ENCODE measurements at regions of chr10 and their contacts with region 1.

Region 1: DNA sequence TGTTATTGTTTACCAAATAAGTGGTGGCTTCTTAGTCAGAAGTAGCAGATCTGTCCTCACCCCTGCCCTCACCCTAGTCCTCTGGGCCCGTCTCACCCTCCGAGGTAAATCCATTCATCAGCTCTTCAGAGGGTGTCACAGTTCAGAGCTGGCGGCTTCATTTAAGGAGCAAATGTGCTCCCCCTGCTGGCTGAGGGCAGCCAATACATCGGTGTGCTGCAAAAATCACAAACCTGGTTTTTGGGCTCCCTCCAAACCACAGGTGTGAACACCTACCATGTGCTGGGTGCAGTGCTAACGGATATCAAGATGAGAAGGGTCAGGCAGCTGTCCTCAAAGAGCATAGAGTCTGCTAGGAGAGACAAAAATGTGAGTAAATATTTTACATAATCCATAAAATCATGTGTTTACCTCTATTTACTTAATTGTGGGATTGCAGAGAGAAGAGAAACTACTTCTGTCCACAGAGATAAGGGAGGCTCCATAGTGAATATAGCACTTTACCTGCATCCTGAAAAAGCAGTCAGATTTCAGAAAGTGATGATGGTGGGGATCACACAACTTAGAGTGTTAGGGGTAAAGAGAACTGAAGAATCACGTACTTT is 15.5 kb upstream of the CRTAC1 start:
- DNase-seq: no peak
- H3K4me3 ChIP-seq: no peak overlapping the region
- CTCF ChIP-seq: peak; percentile 75

Region 2: DNA sequence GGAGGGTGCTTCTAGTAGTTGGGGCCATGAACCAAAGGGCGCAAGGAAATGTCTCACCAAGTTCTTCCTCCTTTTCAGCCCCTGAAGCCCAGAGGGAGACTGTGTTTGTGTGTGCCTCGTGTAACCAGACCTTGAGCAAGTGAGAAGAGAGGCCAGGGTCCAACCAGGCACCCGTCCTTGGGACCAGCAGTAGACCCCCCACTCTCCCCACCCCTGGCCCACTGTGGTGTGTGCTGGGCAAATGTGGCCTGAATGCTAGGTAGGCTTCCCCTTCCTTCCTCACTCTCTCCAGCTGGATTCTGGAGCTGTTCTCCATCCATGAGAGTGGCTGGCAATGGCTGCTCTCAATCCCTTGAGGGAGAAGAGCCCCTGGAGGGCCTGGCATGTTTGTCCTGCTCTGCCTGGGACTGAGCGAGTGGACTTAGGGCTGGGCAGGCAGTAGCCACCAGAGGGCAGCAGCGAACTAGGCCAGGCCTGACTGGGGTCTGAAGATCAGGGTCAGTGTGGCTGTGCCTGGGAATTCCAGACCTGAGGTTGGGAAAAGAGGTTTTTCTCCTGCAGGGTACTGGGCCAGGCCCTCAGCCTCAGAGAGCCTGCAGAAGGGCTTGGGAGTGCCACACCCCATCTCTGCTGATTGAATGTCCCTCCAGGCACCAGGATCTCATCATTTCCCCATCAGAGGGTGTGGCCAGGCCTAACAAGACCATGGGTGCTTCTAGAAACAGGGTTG is 286.6 kb before region 1 on chr10:
- CTCF ChIA-PET with region 1: interaction called, 11 read pairs
- POLR2A ChIA-PET with region 1: no interaction called
- DNase-seq: no peak
- H3K4me3 ChIP-seq: no peak overlapping the region
- CTCF ChIP-seq: peak; percentile 96

Region 3: DNA sequence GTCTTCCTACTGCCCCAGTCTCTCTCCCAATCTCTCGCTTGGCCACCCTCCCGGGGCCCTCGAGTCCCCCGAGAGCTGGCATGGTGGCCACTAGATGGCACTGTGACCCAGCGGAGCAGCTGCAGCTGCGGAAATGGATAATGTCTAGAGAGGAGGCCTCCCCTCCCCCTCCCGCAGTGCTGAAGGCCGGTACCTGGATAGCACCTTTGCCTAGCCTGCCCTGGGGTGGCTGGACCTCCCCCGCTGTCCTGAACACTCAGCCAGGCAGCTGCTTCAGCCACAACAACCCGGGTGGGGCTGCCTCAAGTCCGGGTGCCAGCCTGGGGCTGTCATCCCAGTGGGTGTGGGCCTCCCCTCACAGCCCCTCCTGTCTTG is 131.1 kb before region 1 on chr10:
- CTCF ChIA-PET with region 1: interaction called, 157 read pairs
- POLR2A ChIA-PET with region 1: interaction called, 3 read pairs
- DNase-seq: no peak
- H3K4me3 ChIP-seq: no peak overlapping the region
- CTCF ChIP-seq: peak; percentile 91

Region 4: GRCh38 chr10:98055875-98056516 is 10.1 kb after region 1 on chr10:
- CTCF ChIA-PET with region 1: interaction called, 48 read pairs
- POLR2A ChIA-PET with region 1: no interaction called
- DNase-seq: no peak
- H3K4me3 ChIP-seq: no peak overlapping the region
- CTCF ChIP-seq: no peak

Region 5: DNA sequence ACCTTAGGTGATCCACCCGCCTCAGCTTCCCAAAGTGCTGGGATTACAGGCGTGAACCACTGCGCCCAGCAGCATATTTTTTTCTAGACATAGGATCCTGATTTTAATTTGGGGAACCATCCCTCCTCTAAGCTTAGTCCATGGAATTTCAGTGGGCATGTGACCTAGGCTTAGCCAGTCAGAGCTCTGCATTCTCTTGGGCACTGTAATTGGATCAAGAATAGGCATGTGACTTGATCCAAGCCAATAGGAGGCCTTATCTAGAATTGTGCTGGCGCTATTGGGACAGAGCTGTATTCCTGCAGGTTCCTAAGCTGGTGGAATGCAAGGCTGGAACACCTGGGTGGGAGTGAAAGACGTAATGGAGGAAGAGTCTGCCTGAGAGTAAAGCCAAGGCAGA is 21.3 kb after region 1 on chr10:
- CTCF ChIA-PET with region 1: interaction called, 14 read pairs
- POLR2A ChIA-PET with region 1: no interaction called
- DNase-seq: no peak
- H3K4me3 ChIP-seq: no peak overlapping the region
- CTCF ChIP-seq: no peak